Ascending aorta (tissue), 2 donors: ENCODE measurements at regions of chrX and their contacts with region 1.

Region 1: GRCh38 chrX:153032397-153033118 is 23.7 kb upstream of the PNMA3 start:
- DNase-seq: peak in 1 of 2 donors; percentile 80
- H3K4me3 ChIP-seq: peak overlapping the region; percentile 26 to 55
- H3K27ac ChIP-seq: no peak overlapping the region
- H3K4me1 ChIP-seq: no peaks in the 10 kb centered on the region
- H3K27me3 ChIP-seq: no peaks in the 10 kb centered on the region
- CTCF ChIP-seq: peak; percentile 76 to 85 (median 85)

Region 2: GRCh38 chrX:152212969-152213368 is 819.6 kb before region 1 on chrX:
- intact Hi-C with region 1: no loop called
- DNase-seq: no peak
- H3K4me3 ChIP-seq: no peak overlapping the region
- H3K27ac ChIP-seq: no peak overlapping the region
- H3K4me1 ChIP-seq: no peaks in the 10 kb centered on the region
- H3K27me3 ChIP-seq: no peaks in the 10 kb centered on the region
- CTCF ChIP-seq: no peak

Region 3: DNA sequence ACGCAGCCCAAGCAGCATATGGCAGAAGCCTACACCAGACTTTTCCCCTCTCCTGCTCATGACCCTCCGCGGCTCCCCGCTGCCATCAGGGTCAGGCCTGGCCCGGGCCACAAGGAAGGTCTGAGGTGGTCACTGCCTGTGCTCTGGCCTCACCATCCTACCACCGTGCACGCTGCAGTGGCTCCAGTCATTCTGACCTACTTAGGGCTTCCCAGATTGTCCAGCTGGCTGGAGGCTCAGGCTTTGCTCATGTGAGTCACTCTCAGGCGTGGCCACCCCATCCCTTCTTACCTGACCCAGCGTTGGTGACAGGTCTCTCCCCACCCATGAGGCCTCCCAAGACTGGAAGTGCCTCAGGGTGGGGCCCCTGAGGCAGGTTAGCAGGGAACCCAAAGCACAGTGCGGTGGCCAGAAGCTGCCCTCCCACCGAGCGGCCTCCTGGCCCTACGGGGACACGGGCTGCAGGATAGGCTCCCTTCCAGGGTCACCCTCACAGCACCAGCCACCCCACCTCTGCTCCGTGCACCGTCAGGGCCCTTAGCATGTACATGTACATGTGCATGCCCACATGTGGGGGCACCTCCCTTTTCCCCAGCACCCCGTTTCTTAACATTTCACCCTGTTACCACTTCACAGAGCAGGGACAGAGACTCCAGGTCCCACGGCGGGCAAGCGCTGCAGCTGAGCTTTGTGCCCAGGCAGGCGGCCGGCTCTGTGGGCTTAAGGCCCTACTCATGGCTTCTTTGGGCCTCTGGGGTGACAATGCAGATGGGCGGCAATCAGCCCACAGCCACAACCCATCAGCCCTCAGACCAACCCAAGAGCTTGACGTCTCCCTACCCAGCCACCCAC is 411.1 kb after region 1 on chrX:
- intact Hi-C with region 1: loop called (anchors 10 kb)
- DNase-seq: no peak
- H3K4me3 ChIP-seq: no peak overlapping the region
- H3K27ac ChIP-seq: no peak overlapping the region
- H3K4me1 ChIP-seq: no peaks in the 10 kb centered on the region
- H3K27me3 ChIP-seq: no peaks in the 10 kb centered on the region
- CTCF ChIP-seq: no peak

Region 4: DNA sequence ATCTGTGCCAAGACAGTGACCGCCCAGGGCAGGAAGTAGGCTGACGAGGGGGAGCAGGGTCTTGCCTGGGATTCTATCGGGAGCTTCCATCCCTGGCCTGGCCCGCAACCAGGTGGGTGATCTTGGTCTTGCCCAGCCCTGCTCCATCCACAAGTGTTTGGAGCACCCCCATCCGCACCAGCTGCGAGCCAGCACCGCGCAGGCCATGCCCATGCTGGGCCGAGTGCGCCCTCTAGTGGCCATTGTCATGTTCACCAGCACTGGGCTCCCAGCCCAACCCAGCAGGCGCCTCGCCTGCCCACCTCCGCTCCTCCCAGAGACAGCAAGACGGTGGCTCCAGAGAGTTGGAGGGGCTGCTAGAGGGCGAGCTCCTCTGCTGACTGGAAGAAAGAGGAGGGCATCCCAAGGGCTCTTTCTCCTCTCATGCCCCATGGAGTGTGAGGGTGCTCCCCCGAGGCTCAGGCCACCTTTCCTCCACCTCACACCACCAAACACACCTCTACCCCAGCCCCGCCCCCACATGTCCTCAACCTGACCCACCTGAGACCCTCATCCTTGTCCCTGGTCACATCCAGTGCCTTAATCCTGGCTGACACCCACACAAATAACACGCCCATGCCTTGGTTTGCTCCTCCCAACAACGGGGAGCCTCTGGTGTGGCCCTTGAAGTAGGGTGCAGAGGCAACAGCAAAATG is 475.1 kb after region 1 on chrX:
- intact Hi-C with region 1: loop called (anchors 5 kb)
- DNase-seq: peak in 1 of 2 donors; percentile 88
- H3K4me3 ChIP-seq: no peak overlapping the region
- H3K27ac ChIP-seq: peak overlapping the region in 1 of 2 donors; percentile 3
- H3K4me1 ChIP-seq: peaks cover 4 to 6% of the 10 kb centered on the region in 2 donors
- H3K27me3 ChIP-seq: no peaks in the 10 kb centered on the region
- CTCF ChIP-seq: peak; percentile 86 to 91 (median 87)